Naive thymus-derived CD4-positive, alpha-beta T cell (primary cell): ENCODE measurements at regions of chr6 and their contacts with region 1.

Region 1: GRCh38 chr6:24855395-24856245 is 56.9 kb upstream of the ARMH2 start:
- DNase-seq: peak; percentile 25 to 83 (median 74)
- ATAC-seq: peak; percentile 78
- H3K4me3 ChIP-seq: no peak overlapping the region
- H3K4me3 Mint-ChIP-seq: peak overlapping the region in 8 of 10 donors; percentile 48 to 89 (median 62)
- H3K27ac ChIP-seq: peak overlapping the region; percentile 72
- H3K27ac Mint-ChIP-seq: peak overlapping the region; percentile 86 to 99 (median 94)
- H3K4me1 ChIP-seq: peaks cover 47 to 59% of the 10 kb centered on the region in 2 donors
- H3K4me1 Mint-ChIP-seq: peaks cover 51 to 72% (median 66%) of the 10 kb centered on the region in 7 donors
- H3K27me3 ChIP-seq: no peaks in the 10 kb centered on the region
- H3K27me3 Mint-ChIP-seq: no peaks in the 10 kb centered on the region

Region 2: DNA sequence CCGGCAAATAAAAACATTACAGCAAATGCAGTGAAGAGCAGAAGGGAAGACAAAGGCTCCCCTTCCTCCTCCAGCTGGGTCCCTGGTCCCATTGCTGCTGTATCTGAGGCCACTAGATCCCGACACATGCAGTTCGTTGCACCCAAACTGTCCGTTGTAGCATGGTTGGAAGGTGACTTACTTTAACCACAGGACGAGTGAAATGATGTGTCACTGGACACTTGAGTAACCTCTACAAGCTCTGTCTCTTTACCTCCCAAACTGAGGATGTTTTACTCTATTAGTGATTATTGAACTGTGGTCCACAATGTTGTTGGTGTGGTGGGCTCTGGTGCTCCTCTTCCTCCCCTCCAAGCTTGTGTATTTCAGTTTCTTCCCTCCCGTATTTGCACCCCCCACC is 10.7 kb before region 1 on chr6:
- CTCF ChIA-PET with region 1: interaction called, 3 read pairs
- POLR2A ChIA-PET with region 1: interaction called, 9 read pairs
- intact Hi-C with region 1: loop called in 1 of 2 experiments (anchors 1 kb)
- DNase-seq: no peak
- ATAC-seq: no peak
- H3K4me3 ChIP-seq: no peak overlapping the region
- H3K4me3 Mint-ChIP-seq: peak overlapping the region in 4 of 10 donors; percentile 30 to 62 (median 41)
- H3K27ac ChIP-seq: peak overlapping the region; percentile 26
- H3K27ac Mint-ChIP-seq: peak overlapping the region in 8 of 9 donors; percentile 79 to 94 (median 90)
- H3K4me1 ChIP-seq: peaks cover 0 to 61% of the 10 kb centered on the region in 2 donors
- H3K4me1 Mint-ChIP-seq: peaks cover 50 to 96% (median 83%) of the 10 kb centered on the region in 7 donors
- H3K27me3 ChIP-seq: no peaks in the 10 kb centered on the region
- H3K27me3 Mint-ChIP-seq: no peaks in the 10 kb centered on the region

Region 3: DNA sequence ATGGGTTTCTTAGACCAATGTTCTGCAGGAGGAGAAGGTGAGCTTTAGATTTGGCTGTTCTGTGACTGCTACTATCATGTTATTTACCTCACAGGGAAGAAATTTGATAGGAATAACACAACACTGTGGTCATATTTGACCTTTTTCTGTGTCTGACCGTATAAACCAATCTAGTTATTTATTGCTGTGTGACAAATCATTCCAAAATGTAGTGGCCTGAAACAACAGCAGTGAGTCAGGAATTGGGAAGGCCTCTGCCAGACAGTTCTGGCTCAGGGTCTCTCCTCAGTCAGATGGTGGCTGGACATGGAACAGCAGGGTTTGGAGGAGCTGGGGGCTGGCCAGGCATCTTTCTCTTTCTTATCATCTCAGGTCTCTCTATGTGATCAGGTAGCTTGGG is 47.2 kb after region 1 on chr6:
- CTCF ChIA-PET with region 1: interaction called, 8 read pairs
- POLR2A ChIA-PET with region 1: interaction called, 6 read pairs
- intact Hi-C with region 1: loop called in 1 of 2 experiments (anchors 2 kb)
- DNase-seq: no peak
- ATAC-seq: no peak
- H3K4me3 ChIP-seq: no peak overlapping the region
- H3K4me3 Mint-ChIP-seq: peak overlapping the region; percentile 30 to 97 (median 59)
- H3K27ac ChIP-seq: peak overlapping the region; percentile 53
- H3K27ac Mint-ChIP-seq: peak overlapping the region; percentile 32 to 99 (median 91)
- H3K4me1 ChIP-seq: peaks cover 81 to 96% of the 10 kb centered on the region in 2 donors
- H3K4me1 Mint-ChIP-seq: peaks cover 69 to 99% (median 96%) of the 10 kb centered on the region in 7 donors
- H3K27me3 ChIP-seq: no peaks in the 10 kb centered on the region
- H3K27me3 Mint-ChIP-seq: no peaks in the 10 kb centered on the region

Region 4: DNA sequence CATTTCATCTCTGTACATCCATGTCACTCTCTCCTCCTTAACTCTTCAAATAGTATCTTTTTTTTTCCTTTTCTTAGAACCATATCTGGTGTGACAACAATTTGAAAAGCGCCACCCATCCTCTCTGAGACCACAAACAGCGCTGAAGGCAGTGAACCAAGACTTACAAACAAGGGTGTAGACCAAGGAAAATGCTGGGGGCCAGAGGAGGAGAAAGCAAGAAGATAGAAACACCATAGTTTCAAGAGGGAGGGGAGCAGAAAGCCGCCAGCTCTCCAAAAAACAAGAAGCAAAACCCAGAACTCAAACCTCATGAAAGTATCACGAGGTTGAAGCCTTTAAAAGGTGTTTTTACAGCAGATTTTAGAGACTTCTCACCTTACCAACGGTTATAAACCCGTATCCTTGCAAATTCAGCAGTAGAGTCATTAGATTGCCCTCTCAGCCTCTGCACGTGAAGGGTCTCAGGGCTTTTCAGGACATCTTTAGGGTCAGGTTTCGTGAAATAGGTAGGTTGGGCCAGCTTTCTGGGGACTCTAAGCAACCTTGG is 93.5 kb after region 1 on chr6:
- CTCF ChIA-PET with region 1: interaction called, 3 read pairs
- POLR2A ChIA-PET with region 1: interaction called, 40 read pairs
- intact Hi-C with region 1: no loop called
- DNase-seq: peak in 7 of 9 donors; percentile 67 to 93 (median 83)
- ATAC-seq: peak; percentile 72
- H3K4me3 ChIP-seq: peak overlapping the region; percentile 50
- H3K4me3 Mint-ChIP-seq: peak overlapping the region; percentile 71 to 86 (median 76)
- H3K27ac ChIP-seq: peak overlapping the region; percentile 75
- H3K27ac Mint-ChIP-seq: peak overlapping the region; percentile 92 to 98 (median 95)
- H3K4me1 ChIP-seq: peaks cover 62 to 68% of the 10 kb centered on the region in 2 donors
- H3K4me1 Mint-ChIP-seq: peaks cover 63 to 91% (median 75%) of the 10 kb centered on the region in 7 donors
- H3K27me3 ChIP-seq: no peaks in the 10 kb centered on the region
- H3K27me3 Mint-ChIP-seq: no peaks in the 10 kb centered on the region

Region 5: DNA sequence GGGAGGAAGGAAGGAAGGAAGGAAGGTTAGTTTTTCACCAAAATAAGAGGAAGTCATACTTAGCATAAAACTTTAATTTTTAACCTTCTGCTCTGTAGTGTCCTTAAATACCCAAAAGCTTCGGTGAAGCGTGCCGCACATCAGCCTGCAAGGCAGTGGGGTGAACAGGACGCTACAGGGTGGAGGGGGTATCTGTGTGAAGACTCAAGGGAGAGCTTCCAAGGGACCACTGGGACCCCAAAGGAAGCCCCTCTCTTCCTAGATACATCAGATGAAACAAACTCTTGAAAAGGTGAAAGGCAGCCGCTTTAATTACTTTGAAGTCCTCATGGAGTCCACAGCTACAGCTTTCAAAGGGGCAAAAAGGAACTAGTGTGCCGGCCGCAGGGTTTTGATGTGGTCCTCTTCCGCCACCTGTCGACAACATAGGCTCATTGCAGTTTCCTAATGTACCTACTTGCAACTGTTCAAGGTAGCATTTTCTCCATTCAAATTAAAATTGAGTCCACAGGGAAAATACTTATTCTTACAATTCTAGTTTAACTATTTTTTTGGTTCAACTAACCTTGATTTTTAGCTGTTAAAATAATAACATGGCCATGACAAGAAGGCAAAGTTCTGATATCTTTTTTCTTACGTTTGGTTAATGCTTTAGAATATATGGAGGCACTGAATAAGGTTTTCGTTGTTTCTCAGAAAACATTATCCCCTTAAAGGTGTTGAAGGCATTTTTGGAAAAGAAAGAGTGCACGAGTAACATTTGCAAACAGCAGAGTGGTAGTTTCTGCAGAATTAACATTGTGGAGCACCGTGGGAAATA is 215.1 kb after region 1 on chr6:
- CTCF ChIA-PET with region 1: interaction called, 5 read pairs
- POLR2A ChIA-PET with region 1: interaction called, 3 read pairs
- intact Hi-C with region 1: loop called (anchors 1 kb)
- DNase-seq: peak; percentile 54 to 85 (median 79)
- ATAC-seq: peak; percentile 99
- H3K4me3 ChIP-seq: no peak overlapping the region
- H3K4me3 Mint-ChIP-seq: peak overlapping the region in 8 of 10 donors; percentile 10 to 70 (median 50)
- H3K27ac ChIP-seq: no peak overlapping the region
- H3K27ac Mint-ChIP-seq: peak overlapping the region; percentile 43 to 92 (median 83)
- H3K4me1 ChIP-seq: peaks cover 0 to 3% of the 10 kb centered on the region in 2 donors
- H3K4me1 Mint-ChIP-seq: peaks cover 5 to 15% (median 9%) of the 10 kb centered on the region in 7 donors
- H3K27me3 ChIP-seq: no peaks in the 10 kb centered on the region
- H3K27me3 Mint-ChIP-seq: peaks cover 0 to 7% (median 0%) of the 10 kb centered on the region in 5 donors